Naive thymus-derived CD8-positive, alpha-beta T cell (primary cell): ENCODE measurements at regions of chrX and their contacts with region 1.

Region 1: GRCh38 chrX:135973548-135974278 is at the start of gene MMGT1:
- DNase-seq: peak; percentile 71 to 91 (median 78)
- ATAC-seq: peak; percentile 87 to 88
- H3K4me3 Mint-ChIP-seq: peak within 1 kb of the TSS; percentile 91 to 99 (median 96)
- H3K27ac Mint-ChIP-seq: peak within 1 kb of the TSS; percentile 92 to 99 (median 98)
- H3K4me1 Mint-ChIP-seq: peaks cover 9 to 31% (median 27%) of the 10 kb centered on the region in 4 donors
- H3K27me3 Mint-ChIP-seq: no peaks in the 10 kb centered on the region
- polyA plus RNA-seq, gene MMGT1: 6.9 to 8.3 (median 7.7) TPM

Region 2: DNA sequence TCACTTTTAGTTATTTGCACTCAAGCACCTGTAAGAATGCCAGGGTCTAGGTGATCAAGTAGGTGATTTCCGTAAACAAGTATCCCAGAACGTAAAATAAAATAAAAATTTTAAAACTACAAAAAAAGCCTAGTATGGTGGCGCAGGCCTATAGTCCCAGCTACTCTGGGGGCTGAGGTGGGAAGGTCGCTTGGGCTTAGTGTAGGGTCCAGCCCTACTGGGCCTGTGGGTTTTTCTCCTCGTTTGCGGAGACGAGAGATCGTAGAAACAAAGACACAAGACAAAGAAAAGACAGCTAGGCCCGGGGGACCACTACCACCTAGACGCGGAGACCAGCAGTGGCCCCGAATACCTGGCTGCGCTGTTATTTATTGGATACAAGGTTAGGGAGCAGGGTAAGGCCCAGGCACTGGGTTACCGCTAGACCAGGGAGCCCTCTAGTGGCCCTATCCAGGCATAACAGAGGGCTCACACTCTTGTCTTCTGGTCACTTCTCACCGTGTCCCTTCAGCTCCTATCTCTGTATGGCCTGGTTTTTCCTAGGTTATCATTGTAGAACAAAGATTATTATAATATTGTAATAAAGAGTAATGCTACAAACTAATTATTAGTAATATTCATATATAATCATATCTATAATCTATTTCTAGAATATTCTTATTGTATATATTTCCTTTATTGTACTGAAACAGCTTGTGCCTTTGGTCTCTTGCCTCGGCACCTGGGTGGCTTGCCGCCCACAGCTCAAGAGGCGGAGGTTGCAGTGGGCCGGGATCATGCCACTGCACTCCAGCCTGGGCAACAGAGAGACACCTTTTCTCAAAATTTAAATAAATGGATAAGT is 41.8 kb before region 1 on chrX:
- POLR2A ChIA-PET with region 1: no interaction called
- DNase-seq: peak in 8 of 10 donors; percentile 1 to 39 (median 18)
- ATAC-seq: no peak
- H3K4me3 Mint-ChIP-seq: no peak overlapping the region
- H3K27ac Mint-ChIP-seq: no peak overlapping the region
- H3K4me1 Mint-ChIP-seq: peaks cover 0 to 2% (median 0%) of the 10 kb centered on the region in 4 donors
- H3K27me3 Mint-ChIP-seq: no peaks in the 10 kb centered on the region

Region 3: GRCh38 chrX:135985141-135985972 is 11.6 kb after region 1 on chrX and contains the start of gene SLC9A6:
- POLR2A ChIA-PET with region 1: interaction called, 32 read pairs
- DNase-seq: peak; percentile 41 to 81 (median 56)
- ATAC-seq: peak; percentile 84 to 87
- H3K4me3 Mint-ChIP-seq: peak within 1 kb of the TSS; percentile 85 to 95 (median 91)
- H3K27ac Mint-ChIP-seq: peak within 1 kb of the TSS; percentile 86 to 96 (median 94)
- H3K4me1 Mint-ChIP-seq: peaks cover 37 to 72% (median 63%) of the 10 kb centered on the region in 4 donors
- H3K27me3 Mint-ChIP-seq: no peaks in the 10 kb centered on the region
- polyA plus RNA-seq, gene SLC9A6: 14.4 to 18.3 (median 17.1) TPM

Region 4: GRCh38 chrX:136519070-136519469 is 545.4 kb after region 1 on chrX:
- POLR2A ChIA-PET with region 1: no interaction called
- DNase-seq: no peak
- ATAC-seq: no peak
- H3K4me3 Mint-ChIP-seq: no peak overlapping the region
- H3K27ac Mint-ChIP-seq: no peak overlapping the region
- H3K4me1 Mint-ChIP-seq: peaks cover 0 to 10% (median 4%) of the 10 kb centered on the region in 4 donors
- H3K27me3 Mint-ChIP-seq: no peaks in the 10 kb centered on the region